BJ (cell line): ENCODE measurements at regions of chr6 and their contacts with region 1.

Region 1: GRCh38 chr6:56314683-56315523 is 67.5 kb upstream of the COL21A1 start:
- DNase-seq: no peak
- H3K4me3 ChIP-seq: no peak overlapping the region
- H3K27me3 ChIP-seq: peaks cover 2% of the 10 kb centered on the region; the same call in 1 of the 2 replicates
- CTCF ChIP-seq: peak; percentile 85

Region 2: GRCh38 chr6:56329271-56330050 is 14.6 kb after region 1 on chr6:
- CTCF ChIA-PET with region 1: interaction called, 21 read pairs
- POLR2A ChIA-PET with region 1: no interaction called
- DNase-seq: no peak
- H3K4me3 ChIP-seq: no peak overlapping the region
- H3K27me3 ChIP-seq: no peaks in the 10 kb centered on the region
- CTCF ChIP-seq: no peak

Region 3: DNA sequence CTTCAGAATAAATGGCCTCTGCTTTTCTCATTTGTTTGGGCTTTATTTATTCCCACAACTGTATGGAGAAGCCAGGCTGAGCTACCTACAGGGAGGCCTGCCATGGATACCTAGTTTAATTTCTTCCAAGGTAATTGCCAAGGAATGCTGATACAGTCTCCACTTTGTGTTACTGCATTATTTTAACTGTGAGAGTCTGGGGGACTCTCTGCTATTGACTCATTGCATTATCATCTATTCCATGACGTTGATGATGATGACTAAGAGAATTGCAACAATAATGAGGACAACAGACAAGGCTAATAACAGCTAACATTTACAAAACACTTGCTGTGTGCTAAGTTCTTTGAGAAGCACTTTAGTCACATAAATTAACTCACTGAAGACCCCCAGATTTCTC is 20.8 kb after region 1 on chr6:
- CTCF ChIA-PET with region 1: interaction called, 14 read pairs
- POLR2A ChIA-PET with region 1: no interaction called
- DNase-seq: peak; percentile 65
- H3K4me3 ChIP-seq: no peak overlapping the region
- H3K27me3 ChIP-seq: no peaks in the 10 kb centered on the region
- CTCF ChIP-seq: no peak

Region 4: DNA sequence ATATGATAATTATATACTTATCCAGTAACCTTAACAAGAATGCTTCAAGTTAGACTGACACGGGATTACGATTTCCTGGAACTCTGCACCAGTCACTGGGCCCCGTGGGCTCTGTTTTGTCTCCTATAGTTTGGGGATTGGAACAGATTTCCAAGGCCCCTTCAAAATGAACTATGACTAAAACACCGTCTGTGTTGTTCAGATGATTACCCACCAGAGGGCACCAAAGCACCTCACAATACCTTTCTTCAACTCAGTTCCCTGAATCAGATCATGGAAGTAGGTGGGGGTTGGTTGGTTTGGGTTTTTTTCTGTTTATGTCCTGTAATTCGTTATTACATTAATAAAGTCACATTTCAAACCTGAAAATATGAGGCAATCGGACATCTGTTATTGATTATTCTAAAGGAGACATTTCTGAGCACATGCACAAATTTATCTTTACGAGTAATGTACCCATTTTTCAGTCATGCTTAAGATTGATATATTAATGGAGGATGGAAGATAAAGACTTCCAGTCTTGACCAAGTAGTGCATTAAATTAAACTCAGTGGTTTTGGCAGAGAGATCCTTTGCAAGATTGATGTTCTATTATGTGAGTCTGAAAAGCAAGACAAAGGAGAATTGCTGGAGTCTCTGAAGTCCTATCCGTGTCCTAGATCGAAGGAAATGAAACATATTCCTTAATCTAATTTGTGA is 44.4 kb after region 1 on chr6:
- CTCF ChIA-PET with region 1: interaction called, 14 read pairs
- POLR2A ChIA-PET with region 1: no interaction called
- DNase-seq: no peak
- H3K4me3 ChIP-seq: no peak overlapping the region
- H3K27me3 ChIP-seq: no peaks in the 10 kb centered on the region
- CTCF ChIP-seq: peak; percentile 59

Region 5: DNA sequence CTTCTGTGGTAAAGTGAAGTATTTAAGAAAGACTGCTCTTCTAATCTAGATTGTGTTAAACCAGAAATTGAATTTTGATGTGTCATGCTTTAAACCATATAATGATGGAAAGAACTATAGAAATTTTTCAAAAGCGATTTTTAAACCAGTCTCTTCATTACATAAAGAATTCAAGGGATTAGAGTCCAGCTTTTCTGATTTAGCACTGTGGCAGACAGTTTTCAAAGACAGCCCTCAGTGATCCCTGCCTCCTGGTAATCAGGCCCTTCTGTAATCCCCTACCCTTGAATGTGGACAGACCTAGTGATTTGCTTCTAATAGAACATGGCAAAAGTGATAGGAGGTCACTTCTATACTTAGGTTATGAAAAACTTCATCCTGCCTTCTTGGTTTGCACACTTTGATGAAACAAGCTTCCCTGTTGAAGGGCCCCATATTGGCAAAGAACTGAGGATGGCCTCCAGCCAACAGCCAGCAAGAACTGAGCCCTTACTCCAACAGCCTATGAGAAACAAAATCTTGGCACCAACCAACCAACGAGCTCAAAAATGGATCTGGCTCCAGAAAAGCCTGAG is 136.3 kb after region 1 on chr6:
- CTCF ChIA-PET with region 1: no interaction called
- POLR2A ChIA-PET with region 1: no interaction called
- DNase-seq: no peak
- H3K4me3 ChIP-seq: no peak overlapping the region
- H3K27me3 ChIP-seq: no peaks in the 10 kb centered on the region
- CTCF ChIP-seq: no peak

Region 6: GRCh38 chr6:56570413-56571359 is 255.8 kb after region 1 on chr6:
- CTCF ChIA-PET with region 1: interaction called, 10 read pairs
- POLR2A ChIA-PET with region 1: no interaction called
- DNase-seq: no peak
- H3K4me3 ChIP-seq: no peak overlapping the region
- H3K27me3 ChIP-seq: no peaks in the 10 kb centered on the region
- CTCF ChIP-seq: peak; percentile 58